Mammary epithelial cell (primary cell): ENCODE measurements at regions of chr1 and their contacts with region 1.

Region 1: DNA sequence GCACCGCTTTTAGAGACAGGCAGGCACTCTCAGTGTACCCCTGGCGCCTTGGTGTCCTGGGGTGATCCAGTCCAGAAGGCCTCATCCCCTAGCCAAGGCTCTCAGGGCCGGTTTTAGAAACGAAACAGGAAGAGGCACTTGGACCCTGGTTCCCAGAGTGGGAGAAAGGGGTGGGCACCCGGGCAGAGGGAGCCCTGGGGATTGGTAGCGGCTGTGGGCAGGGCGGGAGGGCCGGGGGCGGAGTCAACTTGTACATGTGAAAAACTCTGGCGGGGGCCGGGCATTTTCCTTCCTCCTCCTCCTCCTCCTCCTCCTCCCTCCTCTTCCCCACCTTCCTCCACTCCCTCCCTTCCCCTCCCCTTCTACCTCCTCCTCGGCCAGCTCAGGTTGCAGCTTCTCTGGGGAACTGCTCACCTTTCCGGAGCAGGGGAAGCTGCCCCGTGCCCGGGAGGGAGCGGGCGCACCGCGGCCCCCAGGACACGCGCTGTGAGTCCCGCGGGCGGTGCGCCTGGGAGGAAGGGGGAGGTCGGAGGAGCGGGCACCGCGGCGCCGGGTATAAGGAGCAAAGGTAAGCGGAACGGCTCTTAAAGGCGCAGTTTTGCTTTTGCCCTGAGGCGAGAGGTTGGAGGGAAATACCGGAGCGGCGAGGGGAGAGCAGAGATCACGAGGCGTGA is at the start of gene CDK18:
- DNase-seq: peak; percentile 85
- H3K4me3 ChIP-seq: peak within 1 kb of the TSS; percentile 71 to 84 (median 71)
- H3K27ac ChIP-seq: peak within 1 kb of the TSS; percentile 65
- H3K4me1 ChIP-seq: peaks cover 29% of the 10 kb centered on the region
- H3K27me3 ChIP-seq: no peaks in the 10 kb centered on the region
- CTCF ChIP-seq: no peak
- total RNA-seq, gene CDK18: 23.2 to 28.6 TPM

Region 2: DNA sequence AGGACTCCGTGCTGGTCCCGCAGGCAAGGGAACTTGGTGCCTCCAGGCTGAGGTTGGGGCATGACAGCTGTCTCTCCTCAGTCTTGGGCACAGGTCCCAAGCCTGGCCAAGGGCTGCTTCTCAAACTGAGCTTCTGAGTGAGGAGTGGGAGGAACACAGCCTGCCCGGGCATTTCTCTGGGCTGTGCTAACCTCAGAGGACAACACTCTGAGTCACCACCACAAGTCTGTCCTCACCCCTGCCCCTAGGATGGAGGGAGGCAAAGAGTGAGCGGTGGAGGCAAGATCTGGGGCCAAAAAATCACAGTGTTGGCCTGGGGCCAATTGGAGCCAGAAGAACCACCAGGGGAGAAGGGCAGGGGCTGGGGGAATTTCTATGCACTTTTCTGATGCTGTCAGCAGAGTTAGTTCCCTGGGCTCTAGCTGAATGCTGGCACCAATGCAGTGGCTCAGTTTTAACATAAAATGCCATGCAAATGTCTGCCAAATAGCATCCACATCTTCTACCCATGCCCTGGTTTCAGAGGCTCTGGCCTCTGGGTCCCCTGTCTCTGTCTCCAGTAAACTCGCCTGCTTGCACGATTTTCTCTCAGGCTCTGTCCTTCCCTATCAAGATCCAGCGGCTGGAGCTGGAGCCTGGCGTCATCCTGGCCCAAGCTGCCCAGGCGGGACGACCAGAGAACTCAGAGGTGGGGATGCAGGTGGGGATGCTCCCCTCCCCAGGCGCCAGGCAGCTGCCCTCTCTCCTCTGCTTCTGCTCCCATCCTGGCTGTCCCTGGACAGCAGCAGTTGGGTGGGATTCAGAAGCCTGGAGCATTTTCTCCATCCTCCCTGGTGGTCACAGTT is 11.0 kb before region 1 on chr1:
- CTCF ChIA-PET with region 1: no interaction called
- dilution Hi-C with region 1: no loop called
- in situ Hi-C with region 1: no loop called
- intact Hi-C with region 1: loop called (anchors 1 kb)
- DNase-seq: peak; percentile 85
- H3K4me3 ChIP-seq: no peak overlapping the region
- H3K27ac ChIP-seq: peak overlapping the region; percentile 33
- H3K4me1 ChIP-seq: peaks cover 23% of the 10 kb centered on the region
- H3K27me3 ChIP-seq: no peaks in the 10 kb centered on the region
- CTCF ChIP-seq: no peak